Activated CD4-positive, alpha-beta memory T cell treated with anti-CD3 and anti-CD28 coated beads for 36 hours (primary cell): ENCODE measurements at regions of chr17 and their contacts with region 1.

Region 1: GRCh38 chr17:42388381-42389134 is at the start of gene STAT3:
- DNase-seq: peak; percentile 100
- H3K4me3 Mint-ChIP-seq: peak within 1 kb of the TSS; percentile 88
- H3K27ac Mint-ChIP-seq: peak within 1 kb of the TSS; percentile 99
- H3K4me1 Mint-ChIP-seq: peaks cover 57% of the 10 kb centered on the region
- H3K27me3 Mint-ChIP-seq: no peaks in the 10 kb centered on the region
- total RNA-seq, gene STAT3: 194 to 198 TPM

Region 2: GRCh38 chr17:42276359-42276608 is 112.3 kb before region 1 on chr17 and contains the start of gene STAT5B:
- CTCF ChIA-PET with region 1: no interaction called
- POLR2A ChIA-PET with region 1: interaction called, 5 read pairs
- intact Hi-C with region 1: loop called (anchors 5 kb)
- DNase-seq: peak; percentile 74
- H3K4me3 Mint-ChIP-seq: peak within 1 kb of the TSS; percentile 93
- H3K27ac Mint-ChIP-seq: peak within 1 kb of the TSS; percentile 97
- H3K4me1 Mint-ChIP-seq: peaks cover 34% of the 10 kb centered on the region
- H3K27me3 Mint-ChIP-seq: no peaks in the 10 kb centered on the region
- total RNA-seq, gene STAT5B: 192 to 195 TPM

Region 3: DNA sequence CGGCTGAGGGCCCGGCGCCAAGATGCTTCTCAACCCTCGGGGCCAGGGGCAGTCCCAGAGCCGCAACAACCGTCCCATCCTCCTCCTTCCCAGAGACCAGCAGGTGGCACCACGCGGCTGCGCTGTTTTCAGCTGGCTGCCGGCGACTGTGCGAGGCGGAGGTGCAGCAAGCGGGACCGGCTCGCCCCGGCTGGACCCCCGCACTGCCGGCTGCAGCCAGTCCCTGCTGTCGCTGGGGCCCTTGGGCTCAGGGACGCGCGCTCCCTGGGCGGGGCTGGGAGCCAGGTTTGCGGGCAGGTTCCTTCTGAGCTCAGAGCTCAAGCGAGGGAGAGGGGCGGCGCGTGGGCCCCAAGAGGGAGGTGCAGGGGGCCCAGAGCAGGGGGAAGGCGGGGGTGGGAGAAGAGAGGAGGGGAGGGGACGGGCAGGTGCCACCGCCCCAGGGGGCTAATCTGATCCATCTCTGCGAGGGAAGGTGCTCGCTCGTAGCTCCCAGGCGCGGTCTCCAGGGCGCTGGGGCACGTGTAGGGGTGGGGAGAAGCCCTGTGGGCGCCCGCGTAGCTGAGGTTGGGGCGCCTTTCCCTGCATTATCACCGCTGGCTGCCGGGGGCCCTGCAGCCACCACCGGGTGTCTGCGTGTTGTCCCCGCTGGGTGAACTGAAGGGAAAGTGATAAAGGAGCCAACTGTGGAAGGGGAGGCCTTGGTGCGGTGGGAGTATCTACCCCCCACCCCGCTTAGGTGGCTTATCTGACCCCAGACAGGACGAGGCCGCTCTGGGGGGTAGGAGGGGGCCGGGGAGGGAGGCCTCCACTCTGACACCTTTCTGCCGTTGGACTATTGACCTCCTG is 76.0 kb before region 1 on chr17:
- CTCF ChIA-PET with region 1: interaction called, 17 read pairs
- POLR2A ChIA-PET with region 1: interaction called, 6 read pairs
- intact Hi-C with region 1: no loop called
- DNase-seq: peak; percentile 92
- H3K4me3 Mint-ChIP-seq: peak overlapping the region; percentile 42
- H3K27ac Mint-ChIP-seq: peak overlapping the region; percentile 74
- H3K4me1 Mint-ChIP-seq: peaks cover 76% of the 10 kb centered on the region
- H3K27me3 Mint-ChIP-seq: no peaks in the 10 kb centered on the region

Region 4: GRCh38 chr17:42329025-42329976 is 59.3 kb before region 1 on chr17:
- CTCF ChIA-PET with region 1: interaction called, 11 read pairs
- POLR2A ChIA-PET with region 1: interaction called, 10 read pairs
- intact Hi-C with region 1: loop called (anchors 5 kb)
- DNase-seq: no peak
- H3K4me3 Mint-ChIP-seq: no peak overlapping the region
- H3K27ac Mint-ChIP-seq: peak overlapping the region; percentile 65
- H3K4me1 Mint-ChIP-seq: peaks cover 22% of the 10 kb centered on the region
- H3K27me3 Mint-ChIP-seq: no peaks in the 10 kb centered on the region

Region 5: DNA sequence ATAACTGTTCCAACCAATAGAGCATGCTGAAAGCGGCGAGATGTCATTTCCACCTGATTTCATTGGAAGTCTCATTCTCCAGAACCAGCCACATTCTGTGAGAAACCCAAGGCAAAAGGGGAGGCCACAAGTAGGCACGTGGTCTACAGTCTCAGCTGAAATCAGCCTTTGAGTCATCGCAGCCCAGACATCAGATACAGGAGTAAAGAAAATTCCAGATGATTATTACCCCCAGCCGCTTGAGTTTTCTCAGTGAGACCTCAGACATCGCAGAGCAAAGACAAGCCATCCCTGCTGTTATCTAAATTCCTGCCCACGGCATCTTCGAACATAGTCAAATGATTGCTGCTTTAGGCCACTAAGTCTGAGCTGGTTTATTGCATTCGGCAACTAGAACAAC is 23.4 kb before region 1 on chr17:
- CTCF ChIA-PET with region 1: interaction called, 4 read pairs
- POLR2A ChIA-PET with region 1: interaction called, 5 read pairs
- intact Hi-C with region 1: loop called (anchors 2 kb)
- DNase-seq: peak; percentile 53
- H3K4me3 Mint-ChIP-seq: no peak overlapping the region
- H3K27ac Mint-ChIP-seq: peak overlapping the region; percentile 71
- H3K4me1 Mint-ChIP-seq: peaks cover 71% of the 10 kb centered on the region
- H3K27me3 Mint-ChIP-seq: no peaks in the 10 kb centered on the region